Transverse colon (tissue), 4 donors: ENCODE measurements at regions of chr19 and their contacts with region 1.

Region 1: GRCh38 chr19:34818270-34818669 is 45.3 kb upstream of the ZNF599 start:
- DNase-seq: no peak
- H3K4me3 ChIP-seq: no peak overlapping the region
- H3K27ac ChIP-seq: no peak overlapping the region
- H3K4me1 ChIP-seq: no peaks in the 10 kb centered on the region
- H3K27me3 ChIP-seq: no peaks in the 10 kb centered on the region
- CTCF ChIP-seq: no peak
- EP300 ChIP-seq: no peak
- POLR2A ChIP-seq: no peak

Region 2: DNA sequence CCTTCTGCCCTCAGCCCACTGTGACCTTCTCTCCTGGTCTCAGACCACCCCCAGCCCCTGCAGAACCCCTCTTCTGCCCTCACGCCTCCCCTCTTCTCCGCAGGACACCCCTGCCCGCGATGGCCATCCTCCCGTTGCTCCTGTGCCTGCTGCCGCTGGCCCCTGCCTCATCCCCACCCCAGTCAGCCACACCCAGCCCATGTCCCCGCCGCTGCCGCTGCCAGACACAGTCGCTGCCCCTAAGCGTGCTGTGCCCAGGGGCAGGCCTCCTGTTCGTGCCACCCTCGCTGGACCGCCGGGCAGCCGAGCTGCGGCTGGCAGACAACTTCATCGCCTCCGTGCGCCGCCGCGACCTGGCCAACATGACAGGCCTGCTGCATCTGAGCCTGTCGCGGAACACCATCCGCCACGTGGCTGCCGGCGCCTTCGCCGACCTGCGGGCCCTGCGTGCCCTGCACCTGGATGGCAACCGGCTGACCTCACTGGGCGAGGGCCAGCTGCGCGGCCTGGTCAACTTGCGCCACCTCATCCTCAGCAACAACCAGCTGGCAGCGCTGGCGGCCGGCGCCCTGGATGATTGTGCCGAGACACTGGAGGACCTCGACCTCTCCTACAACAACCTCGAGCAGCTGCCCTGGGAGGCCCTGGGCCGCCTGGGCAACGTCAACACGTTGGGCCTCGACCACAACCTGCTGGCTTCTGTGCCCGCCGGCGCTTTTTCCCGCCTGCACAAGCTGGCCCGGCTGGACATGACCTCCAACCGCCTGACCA is 1121.2 kb after region 1 on chr19:
- in situ Hi-C with region 1: no loop called
- intact Hi-C with region 1: loop called (anchors 5 kb)
- DNase-seq: no peak
- H3K4me3 ChIP-seq: no peak overlapping the region
- H3K27ac ChIP-seq: no peak overlapping the region
- H3K4me1 ChIP-seq: peaks cover 12 to 33% (median 32%) of the 10 kb centered on the region in 4 donors
- H3K27me3 ChIP-seq: no peaks in the 10 kb centered on the region
- CTCF ChIP-seq: no peak
- EP300 ChIP-seq: no peak
- POLR2A ChIP-seq: no peak